Uterus (tissue), 4 donors: ENCODE measurements at regions of chr6 and their contacts with region 1.

Region 1: DNA sequence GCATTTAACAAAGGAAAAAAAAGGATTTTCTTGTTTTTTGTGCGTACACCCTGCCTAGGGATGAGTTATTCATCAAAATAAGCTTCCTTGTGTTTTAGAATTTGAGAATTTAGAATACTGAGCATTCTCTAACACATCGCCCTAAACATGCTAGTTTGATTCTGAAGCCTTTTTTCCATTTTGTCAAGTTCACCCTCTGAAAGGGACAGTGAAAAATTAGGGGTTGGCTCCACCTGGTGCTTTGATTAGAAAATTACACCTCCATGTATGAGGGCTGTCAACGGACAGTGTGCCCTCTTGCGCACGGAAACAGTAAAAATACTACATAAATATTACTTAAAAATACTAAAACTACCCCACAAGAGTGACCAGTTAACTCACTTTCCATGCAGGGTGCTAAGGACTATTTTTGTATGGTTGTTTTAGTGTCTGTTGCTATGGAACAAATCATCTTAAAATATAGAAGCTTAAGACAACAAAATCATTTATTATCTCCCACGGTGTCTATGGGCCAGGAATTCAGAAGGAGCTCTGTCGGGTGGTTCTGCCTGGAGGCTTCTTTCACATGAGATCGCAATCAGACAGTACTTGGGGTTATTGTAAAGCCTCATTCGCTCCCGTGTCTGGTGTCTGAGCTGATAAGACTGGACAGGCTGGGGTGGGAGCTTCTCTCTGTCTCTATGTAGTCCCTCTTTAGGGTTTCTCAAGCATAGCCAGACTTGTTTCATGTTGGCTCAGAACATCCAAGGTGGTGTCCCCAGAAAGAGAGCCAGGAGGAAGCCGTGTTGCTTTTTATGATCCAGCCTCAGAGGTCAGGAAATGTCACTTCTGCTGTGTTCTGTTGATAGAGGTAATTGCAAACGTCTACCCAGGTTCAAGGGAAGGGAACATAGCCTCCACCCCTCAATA is 41.1 kb upstream of the TMEM170B start:
- DNase-seq: peak; percentile 64 to 77
- H3K4me3 ChIP-seq: no peak overlapping the region
- H3K27ac ChIP-seq: peak overlapping the region in 1 of 2 donors; percentile 60
- H3K4me1 ChIP-seq: no peaks in the 10 kb centered on the region
- H3K27me3 ChIP-seq: no peaks in the 10 kb centered on the region
- CTCF ChIP-seq: peak; percentile 90 to 98 (median 94)
- POLR2A ChIP-seq: no peak

Region 2: DNA sequence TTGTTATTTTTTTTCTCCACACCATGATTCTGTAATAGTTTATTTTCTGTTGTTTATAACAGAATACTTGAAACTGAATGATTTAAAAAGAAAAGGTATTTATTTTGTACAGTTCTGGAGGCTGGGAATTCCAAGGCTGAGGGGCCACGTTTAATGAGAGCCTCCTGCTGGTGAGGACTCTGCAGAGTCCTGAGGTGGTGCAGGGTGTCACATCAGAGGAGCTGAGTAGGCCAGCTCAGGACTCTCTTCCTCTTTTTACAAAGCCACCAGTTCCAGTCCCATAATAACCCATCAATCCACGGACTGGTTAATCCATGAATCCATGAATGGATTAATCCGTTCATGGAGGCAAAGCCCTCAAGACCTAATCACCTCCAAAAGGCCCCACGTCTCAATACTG is 1153.1 kb before region 1 on chr6:
- intact Hi-C with region 1: no loop called
- DNase-seq: no peak
- H3K4me3 ChIP-seq: no peak overlapping the region
- H3K27ac ChIP-seq: no peak overlapping the region
- H3K4me1 ChIP-seq: no peaks in the 10 kb centered on the region
- H3K27me3 ChIP-seq: no peaks in the 10 kb centered on the region
- CTCF ChIP-seq: no peak
- POLR2A ChIP-seq: no peak

Region 3: DNA sequence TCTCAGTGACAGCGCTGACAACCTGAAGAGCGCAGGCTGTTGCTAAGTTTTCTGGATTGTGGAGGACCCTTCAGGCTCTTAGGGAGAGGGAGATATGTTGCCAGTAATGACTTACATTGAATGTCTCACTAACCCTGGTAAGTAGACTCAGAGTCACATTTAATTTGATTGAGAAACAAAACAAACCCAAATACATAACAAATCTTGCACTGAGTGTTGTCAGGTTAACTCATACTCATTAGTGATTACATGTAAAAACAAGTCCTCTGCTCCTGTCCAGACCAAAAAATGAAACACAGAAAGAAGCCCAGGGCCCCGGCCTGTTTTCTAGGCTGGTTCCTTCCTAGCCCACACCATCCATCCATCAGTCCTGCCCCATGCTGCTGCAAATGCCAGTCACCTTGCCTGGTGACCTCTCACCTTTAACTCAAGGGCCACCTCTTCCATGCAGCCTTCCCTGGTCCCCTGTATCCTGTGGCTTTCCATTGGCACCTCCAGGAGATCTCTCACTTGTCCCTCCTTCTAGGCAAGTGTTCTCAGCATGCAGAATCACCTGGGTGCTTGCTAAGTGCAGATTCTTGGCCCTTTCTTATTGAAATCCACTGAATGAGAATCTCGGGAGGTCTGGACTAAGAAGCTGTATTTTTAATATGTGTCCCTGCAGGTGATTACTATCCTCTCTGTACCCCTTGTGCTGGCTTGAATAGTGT is 350.1 kb before region 1 on chr6:
- intact Hi-C with region 1: loop called (anchors 5 kb)
- DNase-seq: no peak
- H3K4me3 ChIP-seq: no peak overlapping the region
- H3K27ac ChIP-seq: no peak overlapping the region
- H3K4me1 ChIP-seq: no peaks in the 10 kb centered on the region
- H3K27me3 ChIP-seq: no peaks in the 10 kb centered on the region
- CTCF ChIP-seq: no peak
- POLR2A ChIP-seq: no peak

Region 4: GRCh38 chr6:11172501-11173332 is 323.7 kb before region 1 on chr6:
- intact Hi-C with region 1: loop called (anchors 10 kb)
- DNase-seq: peak; percentile 64 to 66
- H3K4me3 ChIP-seq: no peak overlapping the region
- H3K27ac ChIP-seq: no peak overlapping the region
- H3K4me1 ChIP-seq: no peaks in the 10 kb centered on the region
- H3K27me3 ChIP-seq: no peaks in the 10 kb centered on the region
- CTCF ChIP-seq: peak; percentile 68 to 74 (median 73)
- POLR2A ChIP-seq: no peak

Region 5: GRCh38 chr6:11460001-11460668 is 36.3 kb before region 1 on chr6:
- intact Hi-C with region 1: no loop called
- DNase-seq: no peak
- H3K4me3 ChIP-seq: no peak overlapping the region
- H3K27ac ChIP-seq: no peak overlapping the region
- H3K4me1 ChIP-seq: no peaks in the 10 kb centered on the region
- H3K27me3 ChIP-seq: no peaks in the 10 kb centered on the region
- CTCF ChIP-seq: no peak
- POLR2A ChIP-seq: no peak

Region 6: GRCh38 chr6:11563793-11564192 is 67.4 kb after region 1 on chr6:
- intact Hi-C with region 1: loop called (anchors 10 kb)
- DNase-seq: no peak
- H3K4me3 ChIP-seq: no peak overlapping the region
- H3K27ac ChIP-seq: no peak overlapping the region
- H3K4me1 ChIP-seq: no peaks in the 10 kb centered on the region
- H3K27me3 ChIP-seq: no peaks in the 10 kb centered on the region
- CTCF ChIP-seq: no peak
- POLR2A ChIP-seq: no peak

Region 7: GRCh38 chr6:11621119-11621518 is 124.7 kb after region 1 on chr6:
- intact Hi-C with region 1: no loop called
- DNase-seq: no peak
- H3K4me3 ChIP-seq: no peak overlapping the region
- H3K27ac ChIP-seq: no peak overlapping the region
- H3K4me1 ChIP-seq: no peaks in the 10 kb centered on the region
- H3K27me3 ChIP-seq: no peaks in the 10 kb centered on the region
- CTCF ChIP-seq: no peak
- POLR2A ChIP-seq: no peak